ENCODE measurements at regions of chr19 and their contacts with region 1.

Region 1: GRCh38 chr19:38929929-38930775 is at the start of gene SARS2:
- DNase-seq: peak; percentile 87 to 97 (median 92)
- ATAC-seq: peak; percentile 68
- H3K4me3 ChIP-seq: peak within 1 kb of the TSS; percentile 79
- H3K4me3 Mint-ChIP-seq: peak within 1 kb of the TSS; percentile 99
- H3K27ac ChIP-seq: peak within 1 kb of the TSS; percentile 86 to 87
- H3K27ac Mint-ChIP-seq: peak within 1 kb of the TSS; percentile 100
- H3K4me1 ChIP-seq: peaks cover 46% of the 10 kb centered on the region
- H3K4me1 Mint-ChIP-seq: peaks cover 39% of the 10 kb centered on the region
- H3K27me3 ChIP-seq: no peaks in the 10 kb centered on the region
- H3K27me3 Mint-ChIP-seq: no peaks in the 10 kb centered on the region
- CTCF ChIP-seq: peak; percentile 100
- total RNA-seq, gene SARS2: 18.7 to 22.8 TPM

Region 2: DNA sequence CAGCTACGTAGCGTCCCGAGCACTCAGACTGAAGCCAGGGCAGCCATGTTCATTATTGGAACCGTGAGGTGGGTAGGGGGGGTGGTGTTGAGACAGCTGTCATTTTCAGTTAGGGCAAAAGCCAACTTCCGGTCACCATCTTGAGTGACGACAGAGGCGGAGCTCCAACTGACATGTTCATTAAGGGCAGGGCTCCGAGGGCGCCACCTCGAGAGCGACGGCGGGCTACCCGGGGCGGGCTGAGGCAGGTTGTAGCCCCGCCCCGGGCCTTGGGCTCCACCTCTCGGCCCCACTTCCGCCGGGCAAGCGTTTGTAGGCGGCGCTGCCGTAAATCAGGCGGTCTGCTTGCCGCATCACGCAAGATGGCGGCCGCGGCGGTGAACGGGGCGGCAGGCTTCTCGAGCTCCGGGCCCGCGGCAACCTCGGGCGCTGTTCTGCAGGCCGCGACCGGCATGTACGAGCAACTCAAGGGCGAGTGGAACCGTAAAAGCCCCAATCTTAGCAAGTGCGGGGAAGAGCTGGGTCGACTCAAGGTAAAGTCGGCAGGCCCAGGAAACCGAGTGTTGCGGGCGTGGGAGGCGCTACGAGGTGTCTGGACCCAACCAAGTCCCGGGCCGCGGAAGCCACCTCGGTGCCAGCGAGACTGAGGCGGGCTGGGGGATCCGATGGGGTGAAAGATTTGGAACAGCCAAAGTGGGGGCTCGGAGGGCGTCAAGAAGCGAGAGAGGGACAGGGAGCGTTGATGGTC is 555.5 kb before region 1 on chr19 and contains the start of gene PSMD8:
- CTCF ChIA-PET with region 1: interaction called, 3 read pairs
- POLR2A ChIA-PET with region 1: interaction called, 14 read pairs
- intact Hi-C with region 1: no loop called
- DNase-seq: peak; percentile 95 to 100 (median 98)
- ATAC-seq: peak; percentile 96
- H3K4me3 ChIP-seq: peak within 1 kb of the TSS; percentile 93
- H3K4me3 Mint-ChIP-seq: peak within 1 kb of the TSS; percentile 99
- H3K27ac ChIP-seq: peak within 1 kb of the TSS; percentile 77 to 89
- H3K27ac Mint-ChIP-seq: peak within 1 kb of the TSS; percentile 89
- H3K4me1 ChIP-seq: peaks cover 34% of the 10 kb centered on the region
- H3K4me1 Mint-ChIP-seq: peaks cover 30% of the 10 kb centered on the region
- H3K27me3 ChIP-seq: no peaks in the 10 kb centered on the region
- H3K27me3 Mint-ChIP-seq: peaks cover 6% of the 10 kb centered on the region
- CTCF ChIP-seq: peak; percentile 19
- total RNA-seq, gene PSMD8: 61.2 to 64.4 TPM

Region 3: DNA sequence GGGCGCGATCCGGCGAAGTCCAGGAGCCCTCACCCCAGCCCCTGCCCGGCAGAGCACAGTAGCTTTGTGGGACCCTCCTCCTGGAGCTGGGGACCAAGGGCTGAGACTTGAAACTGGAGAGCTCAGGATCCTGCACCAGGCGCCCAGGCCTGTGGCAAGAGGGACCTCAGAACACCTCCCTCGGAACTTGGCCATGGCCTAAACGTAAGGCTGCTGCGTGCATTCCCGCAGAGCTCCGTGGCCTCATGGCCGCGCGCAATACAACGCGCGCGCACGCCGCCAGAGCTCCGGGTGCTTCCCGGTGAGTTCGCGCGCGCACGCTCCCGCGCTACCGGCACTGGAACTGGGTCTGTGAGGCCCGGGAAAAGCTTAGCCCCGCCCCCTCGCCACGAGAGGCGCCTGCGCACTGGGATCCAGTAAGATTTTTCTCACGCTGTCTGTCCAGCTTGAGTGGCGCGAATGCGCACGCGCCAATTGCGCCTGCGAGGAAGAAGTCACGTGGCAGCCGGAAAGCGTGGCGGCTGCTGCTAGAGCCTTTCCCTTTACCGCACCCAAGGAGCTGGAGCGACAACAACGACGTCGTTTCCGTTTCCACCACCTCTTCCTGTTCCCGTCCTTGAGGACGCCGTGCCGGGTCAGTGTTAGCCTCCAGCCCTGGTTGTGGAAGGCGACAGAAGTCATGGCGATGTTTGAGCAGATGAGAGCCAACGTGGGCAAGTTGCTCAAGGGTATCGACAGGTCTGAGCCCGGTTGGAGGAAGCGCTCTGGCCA is 311.4 kb before region 1 on chr19 and contains the start of gene EIF3K:
- CTCF ChIA-PET with region 1: interaction called, 6 read pairs
- POLR2A ChIA-PET with region 1: interaction called, 9 read pairs
- intact Hi-C with region 1: loop called in 1 of 2 experiments (anchors 5 kb)
- DNase-seq: peak; percentile 92 to 100 (median 96)
- ATAC-seq: peak; percentile 63
- H3K4me3 ChIP-seq: peak within 1 kb of the TSS; percentile 97
- H3K4me3 Mint-ChIP-seq: peak within 1 kb of the TSS; percentile 97
- H3K27ac ChIP-seq: peak within 1 kb of the TSS; percentile 84 to 94
- H3K27ac Mint-ChIP-seq: peak within 1 kb of the TSS; percentile 94
- H3K4me1 ChIP-seq: peaks cover 62% of the 10 kb centered on the region
- H3K4me1 Mint-ChIP-seq: peaks cover 59% of the 10 kb centered on the region
- H3K27me3 ChIP-seq: no peaks in the 10 kb centered on the region
- H3K27me3 Mint-ChIP-seq: no peaks in the 10 kb centered on the region
- CTCF ChIP-seq: no peak
- total RNA-seq, gene EIF3K: 309 to 322 TPM

Region 4: GRCh38 chr19:38729653-38730469 is 200.3 kb before region 1 on chr19:
- CTCF ChIA-PET with region 1: interaction called, 16 read pairs
- POLR2A ChIA-PET with region 1: interaction called, 8 read pairs
- intact Hi-C with region 1: loop called (anchors 1 to 2 kb)
- DNase-seq: peak; percentile 67 to 86 (median 72)
- ATAC-seq: peak; percentile 75
- H3K4me3 ChIP-seq: no peak overlapping the region
- H3K4me3 Mint-ChIP-seq: peak overlapping the region; percentile 30
- H3K27ac ChIP-seq: no peak overlapping the region
- H3K27ac Mint-ChIP-seq: peak overlapping the region; percentile 36
- H3K4me1 ChIP-seq: peaks cover 40% of the 10 kb centered on the region
- H3K4me1 Mint-ChIP-seq: peaks cover 15% of the 10 kb centered on the region
- H3K27me3 ChIP-seq: no peaks in the 10 kb centered on the region
- H3K27me3 Mint-ChIP-seq: no peaks in the 10 kb centered on the region
- CTCF ChIP-seq: peak; percentile 88

Region 5: DNA sequence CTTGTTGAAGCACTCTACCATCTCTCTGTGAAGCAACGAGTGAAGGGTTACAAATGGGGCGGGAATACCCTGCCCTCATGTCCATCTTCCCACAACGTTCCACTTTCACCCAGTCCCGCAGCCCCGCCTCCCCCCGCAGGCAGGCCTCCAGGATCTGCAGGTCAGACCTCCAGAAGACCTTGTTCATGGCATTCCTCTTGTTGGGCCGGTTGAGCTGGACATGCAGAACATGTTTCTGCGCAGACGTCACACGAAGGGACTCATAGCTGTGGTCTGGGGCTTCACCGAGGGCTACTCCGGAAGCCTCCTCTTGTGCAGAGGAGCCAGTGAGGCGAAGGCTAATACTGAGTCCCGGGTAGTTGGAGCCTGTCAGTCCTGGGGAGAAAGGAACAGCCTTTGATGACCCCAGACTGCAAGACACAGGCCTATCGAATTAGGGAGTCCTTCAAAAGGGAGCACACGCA is 99.0 kb before region 1 on chr19:
- CTCF ChIA-PET with region 1: interaction called, 5 read pairs
- POLR2A ChIA-PET with region 1: interaction called, 11 read pairs
- intact Hi-C with region 1: no loop called
- DNase-seq: peak in 3 of 14 experiments; percentile 7 to 61 (median 44)
- ATAC-seq: peak; percentile 7
- H3K4me3 ChIP-seq: peak overlapping the region; percentile 73
- H3K4me3 Mint-ChIP-seq: peak overlapping the region; percentile 94
- H3K27ac ChIP-seq: peak overlapping the region; percentile 69 to 74
- H3K27ac Mint-ChIP-seq: peak overlapping the region; percentile 92
- H3K4me1 ChIP-seq: peaks cover 34% of the 10 kb centered on the region
- H3K4me1 Mint-ChIP-seq: peaks cover 39% of the 10 kb centered on the region
- H3K27me3 ChIP-seq: no peaks in the 10 kb centered on the region
- H3K27me3 Mint-ChIP-seq: no peaks in the 10 kb centered on the region
- CTCF ChIP-seq: no peak

Region 6: GRCh38 chr19:38869856-38870607 is 60.1 kb before region 1 on chr19:
- CTCF ChIA-PET with region 1: interaction called, 10 read pairs
- POLR2A ChIA-PET with region 1: interaction called, 4 read pairs
- intact Hi-C with region 1: no loop called
- DNase-seq: peak; percentile 87 to 98 (median 95)
- ATAC-seq: peak; percentile 93
- H3K4me3 ChIP-seq: peak overlapping the region; percentile 72
- H3K4me3 Mint-ChIP-seq: peak overlapping the region; percentile 86
- H3K27ac ChIP-seq: peak overlapping the region; percentile 62 to 72
- H3K27ac Mint-ChIP-seq: peak overlapping the region; percentile 86
- H3K4me1 ChIP-seq: peaks cover 52% of the 10 kb centered on the region
- H3K4me1 Mint-ChIP-seq: peaks cover 66% of the 10 kb centered on the region
- H3K27me3 ChIP-seq: no peaks in the 10 kb centered on the region
- H3K27me3 Mint-ChIP-seq: no peaks in the 10 kb centered on the region
- CTCF ChIP-seq: peak; percentile 88

Region 7: DNA sequence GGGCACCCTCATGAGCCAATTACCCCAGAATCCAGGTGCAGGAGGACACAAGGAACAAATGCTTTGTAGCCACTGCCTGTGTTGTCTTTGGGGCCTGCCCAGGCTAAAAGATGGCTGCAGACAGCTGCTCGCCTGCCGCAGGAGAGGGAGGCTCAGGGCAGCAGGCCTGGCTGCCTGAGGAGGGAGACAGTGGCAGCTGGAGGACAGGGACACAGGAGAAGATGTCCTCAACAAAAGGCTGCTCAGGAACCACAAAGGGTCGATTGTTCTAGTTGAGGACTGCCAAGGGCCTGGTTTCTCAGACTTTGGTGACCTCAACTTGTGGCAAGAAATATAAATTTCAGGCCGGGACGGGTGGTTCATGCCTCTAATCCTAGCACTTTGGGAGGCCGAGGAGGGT is 38.4 kb before region 1 on chr19:
- CTCF ChIA-PET with region 1: interaction called, 13 read pairs
- POLR2A ChIA-PET with region 1: interaction called, 3 read pairs
- intact Hi-C with region 1: no loop called
- DNase-seq: peak in 1 of 14 experiments; percentile 2
- ATAC-seq: no peak
- H3K4me3 ChIP-seq: no peak overlapping the region
- H3K4me3 Mint-ChIP-seq: no peak overlapping the region
- H3K27ac ChIP-seq: no peak overlapping the region
- H3K27ac Mint-ChIP-seq: no peak overlapping the region
- H3K4me1 ChIP-seq: peaks cover 16% of the 10 kb centered on the region
- H3K4me1 Mint-ChIP-seq: peaks cover 6% of the 10 kb centered on the region
- H3K27me3 ChIP-seq: no peaks in the 10 kb centered on the region
- H3K27me3 Mint-ChIP-seq: no peaks in the 10 kb centered on the region
- CTCF ChIP-seq: no peak

Region 8: GRCh38 chr19:38949580-38950367 is 19.6 kb after region 1 on chr19:
- CTCF ChIA-PET with region 1: no interaction called
- POLR2A ChIA-PET with region 1: no interaction called
- intact Hi-C with region 1: no loop called
- DNase-seq: peak; percentile 60 to 90 (median 77)
- ATAC-seq: peak; percentile 94
- H3K4me3 ChIP-seq: peak overlapping the region; percentile 20
- H3K4me3 Mint-ChIP-seq: peak overlapping the region; percentile 72
- H3K27ac ChIP-seq: no peak overlapping the region
- H3K27ac Mint-ChIP-seq: no peak overlapping the region
- H3K4me1 ChIP-seq: peaks cover 18% of the 10 kb centered on the region
- H3K4me1 Mint-ChIP-seq: peaks cover 13% of the 10 kb centered on the region
- H3K27me3 ChIP-seq: peaks cover 6 to 8% of the 10 kb centered on the region in 2 experiments
- H3K27me3 Mint-ChIP-seq: peaks cover 17% of the 10 kb centered on the region
- CTCF ChIP-seq: no peak